Transverse colon (tissue), 4 donors: ENCODE measurements at regions of chr4 and their contacts with region 1.

Region 1: GRCh38 chr4:141133146-141133998 is at the start of gene RNF150:
- DNase-seq: peak; percentile 58
- H3K4me3 ChIP-seq: peak within 1 kb of the TSS; percentile 36 to 89 (median 58)
- H3K27ac ChIP-seq: peak within 1 kb of the TSS; percentile 81 to 86 (median 84)
- H3K4me1 ChIP-seq: peaks cover 0 to 18% (median 8%) of the 10 kb centered on the region in 4 donors
- H3K27me3 ChIP-seq: peaks cover 62% of the 10 kb centered on the region
- CTCF ChIP-seq: peak; percentile 47 to 62 (median 54)
- EP300 ChIP-seq: no peak
- POLR2A ChIP-seq: no peak
- total RNA-seq, gene RNF150: 2.8 to 15.3 (median 7.9) TPM

Region 2: GRCh38 chr4:140876615-140877364 is 256.6 kb before region 1 on chr4:
- in situ Hi-C with region 1: loop called in 1 of 4 experiments (anchors 10 kb)
- intact Hi-C with region 1: no loop called
- DNase-seq: no peak
- H3K4me3 ChIP-seq: no peak overlapping the region
- H3K27ac ChIP-seq: no peak overlapping the region
- H3K4me1 ChIP-seq: no peaks in the 10 kb centered on the region
- H3K27me3 ChIP-seq: no peaks in the 10 kb centered on the region
- CTCF ChIP-seq: no peak
- EP300 ChIP-seq: no peak
- POLR2A ChIP-seq: no peak

Region 3: GRCh38 chr4:140996766-140997165 is 136.6 kb before region 1 on chr4:
- in situ Hi-C with region 1: no loop called
- intact Hi-C with region 1: loop called (anchors 10 kb)
- DNase-seq: no peak
- H3K4me3 ChIP-seq: no peak overlapping the region
- H3K27ac ChIP-seq: peak overlapping the region in 1 of 4 donors; percentile 47
- H3K4me1 ChIP-seq: peaks cover 0 to 13% (median 6%) of the 10 kb centered on the region in 4 donors
- H3K27me3 ChIP-seq: no peaks in the 10 kb centered on the region
- CTCF ChIP-seq: peak in 1 of 5 experiments; percentile 10
- EP300 ChIP-seq: no peak
- POLR2A ChIP-seq: no peak